ENCODE measurements at regions of chr22 and their contacts with region 1.

Region 1: DNA sequence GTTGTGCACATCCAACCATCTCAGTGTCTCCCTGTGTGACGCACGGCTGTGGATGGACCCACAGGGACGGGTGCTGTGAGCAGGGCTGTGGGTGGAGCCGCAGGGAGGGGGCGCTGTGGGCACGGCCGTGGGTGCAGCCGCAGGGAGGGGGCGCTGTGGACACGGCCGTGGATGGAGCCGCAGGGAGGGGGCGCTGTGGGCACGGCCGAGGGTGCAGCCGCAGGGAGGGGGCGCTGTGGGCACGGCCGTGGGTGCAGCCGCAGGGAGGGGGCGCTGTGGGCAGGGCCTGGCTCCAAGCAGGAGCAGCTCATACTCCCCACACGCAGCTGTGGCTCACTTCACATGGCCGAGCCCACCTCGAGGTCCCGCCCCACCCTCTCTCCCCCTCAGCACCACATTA is 6.0 kb upstream of the MAPK11 start:
- DNase-seq: peak; percentile 73
- H3K4me3 Mint-ChIP-seq: no peak overlapping the region
- H3K27ac Mint-ChIP-seq: no peak overlapping the region
- H3K4me1 Mint-ChIP-seq: peaks cover 1% of the 10 kb centered on the region
- H3K27me3 Mint-ChIP-seq: peaks cover 4% of the 10 kb centered on the region

Region 2: GRCh38 chr22:50136581-50137015 is 139.5 kb before region 1 on chr22:
- CTCF ChIA-PET with region 1: no interaction called
- POLR2A ChIA-PET with region 1: no interaction called
- DNase-seq: no peak
- H3K4me3 Mint-ChIP-seq: no peak overlapping the region
- H3K27ac Mint-ChIP-seq: no peak overlapping the region
- H3K4me1 Mint-ChIP-seq: peaks cover 2% of the 10 kb centered on the region
- H3K27me3 Mint-ChIP-seq: peaks cover 30% of the 10 kb centered on the region

Region 3: GRCh38 chr22:50320671-50321325 is 44.7 kb after region 1 on chr22:
- CTCF ChIA-PET with region 1: interaction called, 10 read pairs
- POLR2A ChIA-PET with region 1: interaction called, 11 read pairs
- DNase-seq: no peak
- H3K4me3 Mint-ChIP-seq: no peak overlapping the region
- H3K27ac Mint-ChIP-seq: no peak overlapping the region
- H3K4me1 Mint-ChIP-seq: peaks cover 3% of the 10 kb centered on the region
- H3K27me3 Mint-ChIP-seq: peaks cover 11% of the 10 kb centered on the region

Region 4: DNA sequence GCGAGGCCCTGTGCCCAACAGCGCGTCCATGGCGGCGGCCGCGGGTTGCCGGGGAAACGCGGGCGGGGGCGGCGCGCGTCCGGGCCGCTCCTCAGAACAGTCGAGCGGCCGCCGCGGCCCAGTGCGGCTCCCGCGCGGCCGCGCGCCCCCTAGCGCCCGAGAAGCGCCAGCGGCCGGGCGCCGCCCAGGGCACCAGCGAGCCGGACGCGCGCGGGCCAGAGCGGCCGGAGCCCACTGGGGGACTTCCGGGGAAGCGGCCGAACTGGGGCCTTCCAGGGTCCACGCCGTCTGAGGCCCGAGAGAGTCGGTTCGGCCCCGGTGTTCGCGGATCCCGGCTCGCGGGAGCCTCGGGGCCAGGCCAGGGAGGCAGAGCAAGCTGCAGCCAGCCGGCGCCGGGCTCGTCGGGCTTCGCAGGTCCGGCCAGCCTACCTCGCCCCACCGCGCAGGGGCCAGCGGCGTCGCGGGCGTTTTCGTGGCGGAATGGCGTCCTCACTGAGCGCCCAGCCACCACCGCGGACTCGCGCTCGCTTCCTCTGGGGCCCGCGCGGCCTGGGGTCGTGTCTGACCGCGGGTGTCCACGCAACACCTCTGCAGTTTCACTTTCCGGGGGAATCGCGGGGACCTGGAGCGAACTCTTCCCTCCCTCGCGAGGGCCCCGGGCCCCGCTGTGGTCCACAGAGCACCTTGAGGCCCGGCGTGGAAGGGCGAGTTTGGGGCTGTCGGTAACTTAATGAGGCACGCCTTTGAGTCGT is 51.0 kb after region 1 on chr22 and contains the start of gene DENND6B:
- CTCF ChIA-PET with region 1: interaction called, 11 read pairs
- POLR2A ChIA-PET with region 1: interaction called, 11 read pairs
- DNase-seq: peak; percentile 75
- H3K4me3 Mint-ChIP-seq: peak within 1 kb of the TSS; percentile 79
- H3K27ac Mint-ChIP-seq: peak within 1 kb of the TSS; percentile 54
- H3K4me1 Mint-ChIP-seq: peaks cover 23% of the 10 kb centered on the region
- H3K27me3 Mint-ChIP-seq: peaks cover 21% of the 10 kb centered on the region
- total RNA-seq, gene DENND6B: 5.0 to 5.6 TPM

Region 5: DNA sequence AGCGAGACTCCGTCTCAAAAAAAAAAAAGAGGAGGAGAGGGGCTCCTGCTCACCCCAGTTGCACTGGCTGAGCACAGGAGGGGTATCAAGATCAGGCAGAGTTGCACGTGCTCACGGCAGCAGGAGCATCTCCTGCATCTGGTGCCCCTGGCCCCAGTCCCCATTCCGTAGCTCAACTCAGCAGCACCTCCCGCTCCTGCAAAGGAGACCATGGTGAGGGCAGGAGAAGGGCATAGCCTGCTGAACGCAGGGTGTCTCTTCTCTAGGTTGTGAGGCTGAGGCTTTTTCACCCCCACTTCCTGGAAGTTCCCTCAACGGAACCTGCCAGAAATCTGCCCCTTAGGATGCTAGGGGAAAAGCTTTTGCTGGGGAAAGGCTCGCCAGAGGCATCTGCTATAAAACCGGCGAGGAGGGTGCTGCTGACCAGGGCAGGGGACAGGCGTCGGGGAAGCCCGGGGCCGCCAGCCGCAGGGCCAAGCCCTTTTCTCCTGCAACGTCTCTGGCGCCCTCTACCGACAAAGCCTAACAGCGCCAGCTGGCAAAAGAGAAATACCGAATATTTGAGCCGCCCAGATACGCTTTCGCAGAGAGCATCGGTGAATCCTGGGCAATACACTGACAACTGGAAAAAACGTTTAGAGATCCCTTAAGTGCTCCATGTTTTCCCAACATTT is 66.0 kb after region 1 on chr22:
- CTCF ChIA-PET with region 1: interaction called, 18 read pairs
- POLR2A ChIA-PET with region 1: interaction called, 3 read pairs
- DNase-seq: peak; percentile 89
- H3K4me3 Mint-ChIP-seq: peak overlapping the region; percentile 77
- H3K27ac Mint-ChIP-seq: peak overlapping the region; percentile 88
- H3K4me1 Mint-ChIP-seq: peaks cover 11% of the 10 kb centered on the region
- H3K27me3 Mint-ChIP-seq: no peaks in the 10 kb centered on the region